Thyroid gland (tissue), 4 donors: ENCODE measurements at regions of chr2 and their contacts with region 1.

Region 1: GRCh38 chr2:71923887-71924533 is 223.7 kb downstream of the CYP26B1 start:
- DNase-seq: peak; percentile 74 to 75
- H3K4me3 ChIP-seq: no peak overlapping the region
- H3K27ac ChIP-seq: no peak overlapping the region
- H3K4me1 ChIP-seq: no peaks in the 10 kb centered on the region
- H3K27me3 ChIP-seq: no peaks in the 10 kb centered on the region
- CTCF ChIP-seq: peak; percentile 60 to 84 (median 79)
- POLR2A ChIP-seq: no peak

Region 2: DNA sequence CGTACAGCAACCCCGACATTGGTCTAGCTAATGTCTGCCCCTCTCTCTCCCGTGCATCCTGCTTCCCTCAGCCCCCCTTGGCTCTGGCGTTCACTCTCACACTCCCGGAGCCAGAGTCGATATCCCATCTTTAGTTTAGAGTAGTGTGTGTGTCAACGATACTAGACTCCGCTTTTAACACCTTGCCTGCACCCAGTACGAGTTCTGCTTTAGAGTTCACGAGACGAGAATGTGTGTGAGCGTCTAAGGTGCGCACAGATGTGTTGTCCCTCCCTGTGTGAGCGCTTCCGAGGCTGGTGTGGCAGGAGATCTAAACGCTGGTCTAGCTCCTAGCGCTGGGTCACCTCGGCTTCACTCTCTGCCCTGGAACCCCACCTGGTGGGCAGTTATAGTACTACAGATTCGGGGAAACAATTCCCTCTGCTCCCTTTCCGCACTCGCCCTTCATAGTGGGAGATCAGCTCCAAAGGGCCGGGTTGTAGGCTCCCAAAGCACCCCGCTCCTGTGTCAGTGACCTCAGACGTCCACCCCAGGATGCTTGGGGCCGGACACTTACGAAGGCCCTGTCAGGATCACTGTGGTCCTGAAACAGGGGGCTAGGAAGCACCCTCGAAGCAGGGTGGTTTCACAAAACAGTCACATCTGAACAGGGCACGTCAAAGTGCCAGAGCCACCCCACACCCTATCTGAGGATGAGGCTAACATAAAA is 226.3 kb after region 1 on chr2:
- intact Hi-C with region 1: loop called (anchors 2 kb)
- DNase-seq: peak; percentile 76 to 79
- H3K4me3 ChIP-seq: peak overlapping the region in 1 of 3 donors; percentile 56
- H3K27ac ChIP-seq: no peak overlapping the region
- H3K4me1 ChIP-seq: peaks cover 40 to 42% of the 10 kb centered on the region in 2 donors
- H3K27me3 ChIP-seq: peaks cover 30% of the 10 kb centered on the region
- CTCF ChIP-seq: peak; percentile 81 to 93 (median 88)
- POLR2A ChIP-seq: no peak

Region 3: DNA sequence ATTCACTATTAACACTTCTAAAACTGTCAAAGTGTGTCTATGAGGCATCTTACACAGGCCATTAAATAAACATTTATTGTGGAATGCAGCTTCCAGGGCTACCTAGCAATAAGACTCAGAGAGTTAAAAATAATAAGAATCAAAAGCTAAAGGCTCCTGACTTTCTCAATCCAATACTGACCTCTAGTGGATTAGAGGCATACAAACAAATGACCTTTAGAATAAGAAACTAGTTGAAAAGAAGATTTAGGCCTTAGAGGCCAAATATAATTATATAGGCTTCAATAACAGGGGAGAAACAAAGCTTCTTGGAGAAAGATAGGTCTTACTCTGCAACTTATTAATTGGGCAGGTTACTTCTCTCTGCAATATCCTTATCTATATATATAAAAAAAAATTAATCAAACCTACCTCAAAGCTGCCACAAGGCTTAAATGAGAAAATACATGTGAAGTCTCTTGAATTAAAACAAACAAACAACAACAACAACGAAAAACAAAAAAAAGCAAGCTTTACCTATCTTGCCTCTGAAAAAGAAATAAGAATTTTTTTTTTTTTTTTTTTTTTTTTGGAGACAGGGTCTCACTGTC is 655.7 kb after region 1 on chr2:
- intact Hi-C with region 1: loop called (anchors 10 kb)
- DNase-seq: no peak
- H3K4me3 ChIP-seq: no peak overlapping the region
- H3K27ac ChIP-seq: no peak overlapping the region
- H3K4me1 ChIP-seq: peaks cover 5 to 9% of the 10 kb centered on the region in 2 donors
- H3K27me3 ChIP-seq: no peaks in the 10 kb centered on the region
- CTCF ChIP-seq: peak; percentile 25 to 72 (median 58)
- POLR2A ChIP-seq: no peak